ENCODE measurements at regions of chr20 and their contacts with region 1.

Region 1: DNA sequence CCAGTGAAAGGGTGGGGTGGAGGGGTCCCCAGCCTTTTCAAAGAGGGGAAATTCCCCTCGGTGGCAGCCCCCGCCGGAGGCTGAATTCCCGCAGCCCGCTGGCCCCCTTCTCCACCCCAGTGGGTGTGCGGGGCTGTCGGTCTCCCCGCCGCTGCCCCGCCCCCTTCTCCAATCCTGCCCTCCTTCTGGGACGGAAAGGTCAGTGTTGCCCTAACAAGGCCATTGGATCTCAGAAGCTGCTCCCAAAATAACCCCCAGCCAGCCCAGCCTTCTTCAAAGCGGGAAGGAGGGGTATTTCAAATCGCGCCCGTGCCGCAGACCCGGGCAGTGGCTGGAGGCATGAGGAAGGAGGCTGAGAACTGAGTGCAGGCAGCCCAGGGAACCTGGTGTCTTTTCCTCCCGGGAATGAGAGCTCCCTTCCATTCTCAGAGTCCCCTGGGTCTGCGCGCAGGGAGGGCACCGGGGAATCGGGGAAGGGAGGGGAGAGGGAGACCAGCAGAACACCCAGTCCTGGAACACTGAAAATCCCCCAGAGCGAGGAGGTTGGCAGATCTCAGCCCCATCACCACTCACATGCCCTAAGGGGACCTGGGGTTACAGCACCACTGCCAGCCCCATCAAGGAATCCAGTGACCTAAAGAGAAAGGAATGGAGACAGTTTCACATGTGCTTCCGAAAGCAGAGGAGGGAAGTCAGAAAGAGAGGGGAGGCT is at the start of gene JPH2:
- DNase-seq: peak; percentile 92
- H3K4me3 Mint-ChIP-seq: peak within 1 kb of the TSS; percentile 67
- H3K27ac Mint-ChIP-seq: peak within 1 kb of the TSS; percentile 79
- H3K4me1 Mint-ChIP-seq: peaks cover 63% of the 10 kb centered on the region
- H3K27me3 Mint-ChIP-seq: no peaks in the 10 kb centered on the region
- CTCF ChIP-seq: no peak
- total RNA-seq, gene JPH2: 11.1 and 14.7 TPM in 2 replicates

Region 2: DNA sequence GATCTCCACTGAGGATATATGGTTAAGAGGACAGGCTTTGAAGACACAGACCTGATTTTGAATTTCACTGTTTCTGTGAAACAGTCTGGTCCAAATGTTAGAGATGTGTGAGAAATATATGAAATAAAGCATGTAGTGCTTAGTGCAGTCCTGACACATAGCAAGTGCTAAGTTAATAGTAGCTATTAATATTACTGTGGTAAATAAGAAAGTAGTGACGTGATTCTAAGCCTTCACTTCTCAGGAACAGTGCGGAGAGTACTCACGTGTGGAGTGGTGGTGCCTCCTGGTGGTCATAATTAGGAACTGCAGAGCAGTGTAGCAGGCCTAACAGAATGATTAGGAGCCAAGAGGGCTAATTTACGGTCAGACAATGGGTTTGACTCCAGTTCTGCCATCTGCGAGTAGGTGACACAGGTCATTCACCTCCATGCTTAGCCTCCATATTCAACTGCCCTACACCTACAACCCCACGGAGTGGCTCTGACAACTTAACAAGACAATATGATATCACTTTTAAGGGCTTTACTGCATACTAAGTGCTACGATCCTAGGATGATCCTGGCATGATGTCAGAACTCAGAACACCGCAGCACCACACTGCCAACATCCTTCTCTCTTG is 106.5 kb before region 1 on chr20:
- CTCF ChIA-PET with region 1: interaction called, 19 read pairs
- POLR2A ChIA-PET with region 1: no interaction called
- intact Hi-C with region 1: no loop called
- DNase-seq: peak; percentile 85
- H3K4me3 Mint-ChIP-seq: no peak overlapping the region
- H3K27ac Mint-ChIP-seq: no peak overlapping the region
- H3K4me1 Mint-ChIP-seq: peaks cover 12% of the 10 kb centered on the region
- H3K27me3 Mint-ChIP-seq: no peaks in the 10 kb centered on the region
- CTCF ChIP-seq: peak; percentile 96

Region 3: DNA sequence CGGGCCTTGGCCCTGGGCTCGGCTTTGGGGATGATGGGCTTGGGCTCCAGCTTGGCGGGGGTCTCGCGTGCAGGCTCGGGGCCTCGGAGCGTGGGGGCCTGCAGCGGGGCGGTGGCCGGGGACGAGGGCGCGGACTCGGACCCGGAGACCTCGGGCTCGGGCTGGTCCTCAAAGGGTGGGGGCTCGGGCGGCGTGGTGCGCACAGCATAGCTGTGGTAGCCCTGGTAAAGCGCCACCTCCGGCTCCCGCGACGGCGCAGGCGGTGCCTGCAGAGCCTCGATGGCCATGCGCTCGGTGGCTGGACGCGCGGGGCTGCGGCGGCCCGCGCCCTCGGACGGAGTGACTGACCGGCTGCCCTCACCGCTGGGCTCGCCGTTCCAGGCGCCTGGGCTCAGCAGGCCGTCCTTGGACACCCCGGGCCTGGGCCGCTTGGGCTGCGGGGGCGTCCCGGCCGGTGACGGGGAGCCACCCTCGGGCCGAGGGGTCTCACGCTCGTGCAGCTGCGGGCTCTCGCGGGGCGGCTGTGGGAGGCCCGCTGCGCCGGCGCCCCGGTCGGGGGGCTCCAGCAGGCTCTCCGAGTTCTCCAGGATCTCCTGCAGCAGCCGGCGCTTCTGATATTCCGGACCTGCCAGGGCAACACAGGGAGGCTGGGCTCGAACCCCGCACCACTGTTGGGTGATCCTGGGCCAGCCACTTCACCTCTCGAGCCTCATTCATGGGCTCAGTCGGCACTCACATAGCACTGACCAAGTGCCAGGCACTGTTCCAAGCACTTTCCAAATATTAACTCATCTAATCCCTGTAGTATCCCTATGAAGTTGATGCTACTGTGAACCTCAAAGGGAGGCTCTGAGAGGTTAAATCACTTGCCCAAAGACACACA is 71.2 kb before region 1 on chr20:
- CTCF ChIA-PET with region 1: interaction called, 638 read pairs
- POLR2A ChIA-PET with region 1: interaction called, 117 read pairs
- intact Hi-C with region 1: loop called (anchors 1 kb)
- DNase-seq: no peak
- H3K4me3 Mint-ChIP-seq: no peak overlapping the region
- H3K27ac Mint-ChIP-seq: no peak overlapping the region
- H3K4me1 Mint-ChIP-seq: peaks cover 6% of the 10 kb centered on the region
- H3K27me3 Mint-ChIP-seq: no peaks in the 10 kb centered on the region
- CTCF ChIP-seq: no peak

Region 4: GRCh38 chr20:44142413-44142812 is 44.8 kb before region 1 on chr20:
- CTCF ChIA-PET with region 1: interaction called, 20 read pairs
- POLR2A ChIA-PET with region 1: no interaction called
- intact Hi-C with region 1: no loop called
- DNase-seq: no peak
- H3K4me3 Mint-ChIP-seq: no peak overlapping the region
- H3K27ac Mint-ChIP-seq: no peak overlapping the region
- H3K4me1 Mint-ChIP-seq: no peaks in the 10 kb centered on the region
- H3K27me3 Mint-ChIP-seq: no peaks in the 10 kb centered on the region
- CTCF ChIP-seq: no peak

Region 5: DNA sequence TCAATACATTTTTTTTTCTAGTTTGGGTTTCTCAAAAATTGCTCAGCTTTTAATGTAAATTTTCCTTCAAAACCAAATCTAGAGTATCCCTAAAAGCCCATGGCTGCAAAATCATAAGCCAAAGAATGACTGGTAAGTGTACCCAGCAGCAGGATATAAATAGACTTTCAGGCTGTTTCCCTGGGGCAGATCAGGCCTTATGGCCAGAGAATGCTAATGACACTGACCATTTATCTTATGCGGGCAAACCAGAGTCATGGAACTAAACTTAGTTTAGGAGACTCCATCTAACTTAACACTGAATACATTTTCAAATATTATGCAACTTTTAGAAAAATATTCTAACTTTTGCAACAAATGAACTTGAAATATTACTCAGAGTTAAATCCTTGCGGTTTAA is 16.0 kb after region 1 on chr20:
- CTCF ChIA-PET with region 1: interaction called, 38 read pairs
- POLR2A ChIA-PET with region 1: interaction called, 62 read pairs
- intact Hi-C with region 1: no loop called
- DNase-seq: no peak
- H3K4me3 Mint-ChIP-seq: no peak overlapping the region
- H3K27ac Mint-ChIP-seq: peak overlapping the region; percentile 80
- H3K4me1 Mint-ChIP-seq: peaks cover 44% of the 10 kb centered on the region
- H3K27me3 Mint-ChIP-seq: no peaks in the 10 kb centered on the region
- CTCF ChIP-seq: no peak

Region 6: DNA sequence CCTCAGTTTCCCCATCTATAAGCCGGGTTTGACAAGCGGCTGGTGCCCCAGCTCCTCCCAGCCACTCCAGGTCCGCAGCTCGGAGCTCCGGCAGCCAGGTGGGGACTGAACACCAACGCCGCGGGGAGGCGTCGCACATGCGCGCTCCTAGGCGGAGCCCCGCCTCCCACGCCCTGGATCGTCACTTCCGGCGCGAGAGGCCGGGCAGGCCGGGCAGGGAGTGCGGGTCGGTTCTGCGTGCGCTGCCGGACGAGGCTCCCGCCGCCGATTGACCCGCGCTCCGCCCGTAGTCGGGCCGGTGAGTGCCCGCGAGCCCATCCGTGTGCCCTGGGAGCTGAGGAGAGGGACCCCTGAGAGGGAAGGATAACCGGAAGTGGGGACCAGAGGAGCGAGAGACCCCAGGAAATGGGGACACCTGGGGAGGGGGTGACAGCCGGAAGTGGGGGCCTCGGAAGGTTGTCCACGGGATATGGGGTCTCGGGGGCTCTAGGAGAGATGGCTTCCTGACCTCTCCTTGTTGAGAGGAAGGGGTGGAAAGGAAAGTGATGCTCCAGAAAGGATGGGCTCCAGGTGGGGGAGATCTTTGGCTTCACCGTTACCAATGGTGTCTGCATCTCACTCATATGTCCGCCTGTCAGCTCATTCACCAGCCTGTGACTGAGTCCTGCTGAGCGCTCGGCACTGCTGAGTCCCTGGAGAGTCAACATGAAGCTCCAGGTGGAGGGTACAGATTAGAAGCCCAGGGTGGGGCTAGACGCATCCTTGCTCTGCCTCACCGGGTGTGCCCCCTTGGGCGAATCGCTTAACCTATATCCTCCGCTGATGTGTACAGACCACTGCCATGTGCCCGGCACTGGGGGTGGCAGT is 288.7 kb after region 1 on chr20 and contains the start of gene TTPAL:
- CTCF ChIA-PET with region 1: interaction called, 14 read pairs
- POLR2A ChIA-PET with region 1: interaction called, 4 read pairs
- intact Hi-C with region 1: no loop called
- DNase-seq: peak; percentile 89
- H3K4me3 Mint-ChIP-seq: peak within 1 kb of the TSS; percentile 98
- H3K27ac Mint-ChIP-seq: peak within 1 kb of the TSS; percentile 98
- H3K4me1 Mint-ChIP-seq: peaks cover 23% of the 10 kb centered on the region
- H3K27me3 Mint-ChIP-seq: no peaks in the 10 kb centered on the region
- CTCF ChIP-seq: no peak
- total RNA-seq, gene TTPAL: 34.1 and 35.4 TPM in 2 replicates

Measured in MCF 10A (cell line).